K562 (cell line): ENCODE measurements at regions of chr19 and their contacts with region 1.

Region 1: GRCh38 chr19:18281082-18282020 is at the start of gene JUND:
- DNase-seq: peak; percentile 84 to 99 (median 92)
- ATAC-seq: peak; percentile 77
- H3K4me3 ChIP-seq: peak within 1 kb of the TSS; percentile 100
- H3K27ac ChIP-seq: peak within 1 kb of the TSS; percentile 100
- H3K4me1 ChIP-seq: peaks cover 21 to 55% of the 10 kb centered on the region in 2 experiments
- H3K27me3 ChIP-seq: no peaks in the 10 kb centered on the region
- CTCF ChIP-seq: peak in 1 of 3 experiments; percentile 14; a peak in 1 of 6 replicates
- EP300 ChIP-seq: 0 out of 2 replicates have a peak, but pooled peaks have one; percentile 36
- POLR2A ChIP-seq: peak; percentile 26
- RAD21 ChIP-seq: 0 out of 4 replicates have a peak, but pooled peaks of 1 of the 2 experiments have one; percentile 19
- polyA plus RNA-seq, gene JUND: 6.4 to 11.8 TPM

Region 2: GRCh38 chr19:18203863-18204393 is 77.4 kb before region 1 on chr19 and contains the start of gene RAB3A:
- CTCF ChIA-PET with region 1: interaction called, 3 read pairs
- POLR2A ChIA-PET with region 1: interaction called, 28 read pairs
- in situ Hi-C with region 1: no loop called
- intact Hi-C with region 1: no loop called
- DNase-seq: peak; percentile 96 to 100 (median 98)
- ATAC-seq: peak; percentile 96
- H3K4me3 ChIP-seq: peak within 1 kb of the TSS; percentile 68
- H3K27ac ChIP-seq: peak within 1 kb of the TSS; percentile 86
- H3K4me1 ChIP-seq: peaks cover 14 to 45% of the 10 kb centered on the region in 2 experiments; a peak in 4 of 5 replicates
- H3K27me3 ChIP-seq: no peaks in the 10 kb centered on the region
- CTCF ChIP-seq: 0 out of 6 replicates have a peak, but pooled peaks of 1 of the 3 experiments have one; percentile 2
- EP300 ChIP-seq: no peak
- POLR2A ChIP-seq: no peak
- RAD21 ChIP-seq: no peak
- polyA plus RNA-seq, gene RAB3A: 0.17 TPM in 1 of 2 experiments, not detected in the other

Region 3: GRCh38 chr19:18259893-18260292 is 21.5 kb before region 1 on chr19:
- CTCF ChIA-PET with region 1: no interaction called
- POLR2A ChIA-PET with region 1: interaction called, 44 read pairs
- in situ Hi-C with region 1: no loop called
- intact Hi-C with region 1: no loop called
- DNase-seq: no peak
- ATAC-seq: no peak
- H3K4me3 ChIP-seq: no peak overlapping the region
- H3K27ac ChIP-seq: no peak overlapping the region
- H3K4me1 ChIP-seq: peaks cover 8 to 38% of the 10 kb centered on the region in 2 experiments
- H3K27me3 ChIP-seq: peaks cover 5 to 22% of the 10 kb centered on the region in 2 experiments; a peak in 3 of 5 replicates
- CTCF ChIP-seq: no peak
- EP300 ChIP-seq: no peak
- POLR2A ChIP-seq: no peak
- RAD21 ChIP-seq: no peak

Region 4: GRCh38 chr19:18304458-18305310 is 23.3 kb after region 1 on chr19:
- CTCF ChIA-PET with region 1: interaction called, 3 read pairs
- POLR2A ChIA-PET with region 1: interaction called, 79 read pairs
- in situ Hi-C with region 1: no loop called
- intact Hi-C with region 1: loop called (anchors 2 kb)
- DNase-seq: peak; percentile 87 to 93 (median 90)
- ATAC-seq: peak; percentile 95
- H3K4me3 ChIP-seq: peak overlapping the region; percentile 28
- H3K27ac ChIP-seq: peak overlapping the region; percentile 81
- H3K4me1 ChIP-seq: peaks cover 30 to 76% of the 10 kb centered on the region in 2 experiments
- H3K27me3 ChIP-seq: no peaks in the 10 kb centered on the region
- CTCF ChIP-seq: peak in 2 of 3 experiments; percentile 16 to 19; a peak in 2 of 6 replicates
- EP300 ChIP-seq: no peak
- POLR2A ChIP-seq: peak; percentile 83; the same call in 1 of the 2 replicates
- RAD21 ChIP-seq: peak in 1 of 2 experiments; percentile 44; a peak in 3 of 4 replicates

Region 5: GRCh38 chr19:18340190-18340989 is 59.0 kb after region 1 on chr19 and contains the start of gene PGPEP1:
- CTCF ChIA-PET with region 1: no interaction called
- POLR2A ChIA-PET with region 1: interaction called, 106 read pairs
- in situ Hi-C with region 1: no loop called
- intact Hi-C with region 1: no loop called
- DNase-seq: peak; percentile 86 to 97 (median 94)
- ATAC-seq: peak; percentile 76
- H3K4me3 ChIP-seq: peak within 1 kb of the TSS; percentile 97
- H3K27ac ChIP-seq: peak within 1 kb of the TSS; percentile 92
- H3K4me1 ChIP-seq: peaks cover 9 to 40% of the 10 kb centered on the region in 2 experiments; a peak in 4 of 5 replicates
- H3K27me3 ChIP-seq: no peaks in the 10 kb centered on the region
- CTCF ChIP-seq: no peak
- EP300 ChIP-seq: no peak
- POLR2A ChIP-seq: peak; percentile 71
- RAD21 ChIP-seq: no peak
- polyA plus RNA-seq, gene PGPEP1: 10.0 to 13.4 TPM

Region 6: GRCh38 chr19:18388100-18388959 is 107.0 kb after region 1 on chr19:
- CTCF ChIA-PET with region 1: interaction called, 3 read pairs
- POLR2A ChIA-PET with region 1: interaction called, 80 read pairs
- in situ Hi-C with region 1: no loop called
- intact Hi-C with region 1: loop called (anchors 1 kb)
- DNase-seq: peak; percentile 88 to 92 (median 90)
- ATAC-seq: peak; percentile 55
- H3K4me3 ChIP-seq: peak overlapping the region; percentile 89
- H3K27ac ChIP-seq: peak overlapping the region; percentile 84
- H3K4me1 ChIP-seq: peaks cover 17 to 47% of the 10 kb centered on the region in 2 experiments
- H3K27me3 ChIP-seq: no peaks in the 10 kb centered on the region
- CTCF ChIP-seq: peak; percentile 95 to 97 (median 96)
- EP300 ChIP-seq: peak; percentile 7; the same call in 1 of the 2 replicates
- POLR2A ChIP-seq: peak; percentile 64
- RAD21 ChIP-seq: peak; percentile 60 to 70

Region 7: GRCh38 chr19:18514800-18515651 is 233.7 kb after region 1 on chr19:
- CTCF ChIA-PET with region 1: no interaction called
- POLR2A ChIA-PET with region 1: no interaction called
- in situ Hi-C with region 1: no loop called
- intact Hi-C with region 1: no loop called
- DNase-seq: peak in 1 of 4 experiments; percentile 45
- ATAC-seq: peak; percentile 38
- H3K4me3 ChIP-seq: no peak overlapping the region
- H3K27ac ChIP-seq: no peak overlapping the region
- H3K4me1 ChIP-seq: peaks cover 19 to 33% of the 10 kb centered on the region in 2 experiments
- H3K27me3 ChIP-seq: no peaks in the 10 kb centered on the region
- CTCF ChIP-seq: no peak
- EP300 ChIP-seq: no peak
- POLR2A ChIP-seq: no peak
- RAD21 ChIP-seq: no peak

Region 8: GRCh38 chr19:19304186-19304965 is 1023.0 kb after region 1 on chr19:
- CTCF ChIA-PET with region 1: no interaction called
- POLR2A ChIA-PET with region 1: no interaction called
- in situ Hi-C with region 1: no loop called
- intact Hi-C with region 1: no loop called
- DNase-seq: peak in 1 of 4 experiments; percentile 6
- ATAC-seq: no peak
- H3K4me3 ChIP-seq: no peak overlapping the region
- H3K27ac ChIP-seq: no peak overlapping the region
- H3K4me1 ChIP-seq: peaks cover 0 to 6% of the 10 kb centered on the region in 2 experiments; a peak in 2 of 5 replicates
- H3K27me3 ChIP-seq: no peaks in the 10 kb centered on the region
- CTCF ChIP-seq: no peak
- EP300 ChIP-seq: no peak
- POLR2A ChIP-seq: no peak
- RAD21 ChIP-seq: no peak